SK-N-SH (cell line): ENCODE measurements at regions of chr3 and their contacts with region 1.

Region 1: GRCh38 chr3:170414202-170414663 is 4.4 kb upstream of the CLDN11 start:
- DNase-seq: peak; percentile 71
- H3K4me3 ChIP-seq: peak overlapping the region in 1 of 2 experiments; percentile 18; a peak in 1 of 4 replicates
- H3K27ac ChIP-seq: peak overlapping the region in 1 of 2 experiments; percentile 22; a peak in 2 of 4 replicates
- H3K4me1 ChIP-seq: peaks cover 0 to 6% of the 10 kb centered on the region in 2 experiments; a peak in 1 of 4 replicates
- H3K27me3 ChIP-seq: no peaks in the 10 kb centered on the region
- CTCF ChIP-seq: peak; percentile 99
- EP300 ChIP-seq: peak in 1 of 2 experiments; percentile 28; a peak in 1 of 4 replicates
- RAD21 ChIP-seq: peak; percentile 100

Region 2: DNA sequence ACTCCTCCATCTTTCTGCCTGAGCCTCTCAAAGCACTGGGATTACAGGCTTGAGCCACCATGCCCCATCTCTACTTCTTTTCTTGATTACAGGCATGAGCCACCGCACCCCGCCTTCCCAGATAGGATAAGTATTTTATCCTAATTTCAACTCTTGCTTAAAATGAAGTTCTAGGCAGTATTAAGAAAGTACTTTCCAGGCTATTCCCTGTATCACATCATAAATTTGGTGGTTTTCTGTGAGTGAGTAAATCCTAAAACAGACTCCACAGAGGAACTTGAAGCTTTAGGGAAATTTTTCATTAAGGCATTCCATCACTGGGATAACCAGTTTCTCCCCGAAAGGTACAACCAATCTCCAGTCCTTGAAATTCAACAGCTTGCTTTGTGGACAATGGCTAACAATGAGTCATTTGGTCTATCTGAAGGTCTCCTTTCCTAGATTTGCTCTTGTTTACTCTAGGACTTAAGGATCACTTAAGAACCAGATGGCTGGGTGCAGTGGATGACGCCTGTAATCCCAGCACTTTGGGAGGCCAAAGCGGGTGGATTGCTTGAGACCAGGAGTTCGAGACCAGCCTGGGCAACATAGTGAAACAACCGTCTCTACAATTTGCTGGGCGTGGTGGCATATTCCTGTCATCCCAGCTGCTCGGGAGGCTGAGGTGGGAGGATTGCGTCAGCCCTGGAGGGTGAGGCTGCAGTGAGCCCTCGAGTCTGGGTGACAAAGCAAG is 106.4 kb before region 1 on chr3:
- CTCF ChIA-PET with region 1: interaction called, 17 read pairs
- POLR2A ChIA-PET with region 1: no interaction called
- DNase-seq: no peak
- H3K4me3 ChIP-seq: no peak overlapping the region
- H3K27ac ChIP-seq: no peak overlapping the region
- H3K4me1 ChIP-seq: no peaks in the 10 kb centered on the region; a peak in 1 of 4 replicates
- H3K27me3 ChIP-seq: no peaks in the 10 kb centered on the region
- CTCF ChIP-seq: no peak
- EP300 ChIP-seq: no peak
- RAD21 ChIP-seq: no peak

Region 3: GRCh38 chr3:170397579-170398177 is 16.6 kb before region 1 on chr3:
- CTCF ChIA-PET with region 1: interaction called, 10 read pairs
- POLR2A ChIA-PET with region 1: no interaction called
- DNase-seq: no peak
- H3K4me3 ChIP-seq: no peak overlapping the region
- H3K27ac ChIP-seq: no peak overlapping the region
- H3K4me1 ChIP-seq: no peaks in the 10 kb centered on the region; a peak in 1 of 4 replicates
- H3K27me3 ChIP-seq: no peaks in the 10 kb centered on the region
- CTCF ChIP-seq: no peak
- EP300 ChIP-seq: no peak
- RAD21 ChIP-seq: no peak

Region 4: GRCh38 chr3:170454509-170454908 is 40.3 kb after region 1 on chr3:
- CTCF ChIA-PET with region 1: no interaction called
- POLR2A ChIA-PET with region 1: no interaction called
- DNase-seq: no peak
- H3K4me3 ChIP-seq: no peak overlapping the region
- H3K27ac ChIP-seq: no peak overlapping the region
- H3K4me1 ChIP-seq: no peaks in the 10 kb centered on the region
- H3K27me3 ChIP-seq: no peaks in the 10 kb centered on the region
- CTCF ChIP-seq: no peak
- EP300 ChIP-seq: no peak
- RAD21 ChIP-seq: no peak

Region 5: DNA sequence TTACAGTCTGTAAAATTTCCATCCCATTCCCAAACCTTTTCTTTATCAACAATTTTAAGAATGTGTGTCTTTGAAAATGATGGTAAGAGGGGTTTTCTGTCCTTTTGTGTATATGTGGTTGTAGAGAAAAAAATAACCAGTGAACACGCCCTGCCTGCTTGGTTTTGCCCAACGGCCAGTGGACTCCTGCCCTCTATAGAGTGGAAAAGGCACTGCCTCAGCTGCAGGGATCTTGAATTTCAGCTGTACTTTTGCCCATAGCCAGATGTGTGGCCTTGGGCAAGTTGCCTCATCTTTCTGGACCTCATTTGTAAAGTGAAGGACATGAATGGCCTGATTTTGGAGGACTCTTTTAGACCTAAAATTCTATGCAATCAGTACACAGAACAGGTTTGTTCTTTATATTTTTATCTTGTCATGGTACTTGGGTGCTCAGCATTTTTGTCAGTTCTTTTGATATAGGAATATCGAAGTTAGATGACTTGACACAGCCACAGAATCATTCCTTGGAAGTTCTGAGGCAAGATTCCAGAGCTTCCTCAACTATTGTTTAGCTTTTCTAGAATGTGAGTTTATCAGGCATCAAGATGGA is 85.4 kb after region 1 on chr3:
- CTCF ChIA-PET with region 1: interaction called, 15 read pairs
- POLR2A ChIA-PET with region 1: no interaction called
- DNase-seq: peak; percentile 62
- H3K4me3 ChIP-seq: no peak overlapping the region; a peak in 1 of 4 replicates
- H3K27ac ChIP-seq: no peak overlapping the region
- H3K4me1 ChIP-seq: no peaks in the 10 kb centered on the region
- H3K27me3 ChIP-seq: no peaks in the 10 kb centered on the region
- CTCF ChIP-seq: peak; percentile 57
- EP300 ChIP-seq: no peak
- RAD21 ChIP-seq: peak; percentile 70

Region 6: DNA sequence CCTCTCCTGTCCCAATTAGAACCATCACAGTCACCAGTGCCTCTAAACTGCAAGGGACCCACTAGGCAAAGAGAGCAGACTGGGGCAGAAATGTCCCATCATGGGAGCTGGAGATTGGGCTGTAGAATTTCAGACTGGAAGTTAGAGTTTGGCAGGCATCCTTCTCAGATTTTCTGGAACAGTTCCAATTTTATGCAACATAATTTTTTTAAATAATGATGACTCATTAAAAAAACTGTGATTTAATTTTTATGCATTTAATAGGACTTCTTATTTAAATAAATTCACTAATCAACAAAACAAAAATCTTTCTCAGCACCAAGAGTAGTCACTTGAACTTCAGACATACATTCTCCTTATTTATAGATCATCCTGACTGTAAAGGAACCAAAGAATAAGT is 256.3 kb after region 1 on chr3:
- CTCF ChIA-PET with region 1: no interaction called
- POLR2A ChIA-PET with region 1: no interaction called
- DNase-seq: no peak
- H3K4me3 ChIP-seq: no peak overlapping the region
- H3K27ac ChIP-seq: no peak overlapping the region
- H3K4me1 ChIP-seq: no peaks in the 10 kb centered on the region; a peak in 1 of 4 replicates
- H3K27me3 ChIP-seq: no peaks in the 10 kb centered on the region
- CTCF ChIP-seq: no peak
- EP300 ChIP-seq: no peak
- RAD21 ChIP-seq: no peak

Region 7: DNA sequence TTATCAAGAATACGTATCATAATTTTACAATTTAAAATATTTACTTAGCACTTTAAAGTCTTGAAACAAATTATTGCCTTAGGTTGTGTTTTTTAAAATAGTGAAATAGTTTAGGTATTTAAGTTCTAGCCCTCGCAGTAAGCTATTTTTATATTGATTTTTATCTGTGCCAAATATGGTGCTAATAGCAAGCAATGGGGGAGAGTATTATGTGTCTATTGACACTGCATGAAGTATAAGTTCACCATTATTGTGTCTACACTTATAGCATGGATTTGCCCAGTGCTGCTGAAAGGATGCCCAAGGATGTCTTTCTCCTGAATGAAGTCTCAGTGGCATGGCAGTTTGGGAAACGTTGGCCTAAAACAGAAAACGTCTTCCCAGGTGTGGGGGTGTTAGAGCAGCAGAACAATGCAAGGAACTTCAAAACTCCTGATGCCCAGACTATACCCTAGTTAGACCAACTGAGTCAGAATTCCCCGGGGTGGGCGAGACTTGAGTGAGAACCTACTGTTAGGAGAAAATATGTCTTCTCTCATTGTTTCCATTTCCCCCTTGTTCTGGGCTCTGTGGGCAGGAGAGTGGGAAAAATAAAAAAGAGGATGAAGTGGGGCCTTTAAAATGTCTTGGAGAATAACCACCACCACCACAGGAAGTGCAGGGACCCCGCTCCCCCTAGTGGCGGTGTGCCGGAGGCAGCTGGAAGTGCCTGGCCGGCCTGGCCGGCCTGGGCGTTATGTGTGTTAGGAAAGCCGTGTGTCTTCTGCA is 275.8 kb after region 1 on chr3:
- CTCF ChIA-PET with region 1: interaction called, 75 read pairs
- POLR2A ChIA-PET with region 1: no interaction called
- DNase-seq: peak; percentile 72
- H3K4me3 ChIP-seq: no peak overlapping the region; a peak in 1 of 4 replicates
- H3K27ac ChIP-seq: peak overlapping the region; percentile 48 to 78
- H3K4me1 ChIP-seq: peaks cover 3 to 19% of the 10 kb centered on the region in 2 experiments; a peak in 3 of 4 replicates
- H3K27me3 ChIP-seq: no peaks in the 10 kb centered on the region
- CTCF ChIP-seq: peak; percentile 64
- EP300 ChIP-seq: no peak
- RAD21 ChIP-seq: peak; percentile 90

Region 8: GRCh38 chr3:170848292-170848917 is 434.2 kb after region 1 on chr3:
- CTCF ChIA-PET with region 1: interaction called, 10 read pairs
- POLR2A ChIA-PET with region 1: no interaction called
- DNase-seq: peak; percentile 7
- H3K4me3 ChIP-seq: no peak overlapping the region
- H3K27ac ChIP-seq: no peak overlapping the region
- H3K4me1 ChIP-seq: no peaks in the 10 kb centered on the region
- H3K27me3 ChIP-seq: no peaks in the 10 kb centered on the region
- CTCF ChIP-seq: peak; percentile 73
- EP300 ChIP-seq: no peak
- RAD21 ChIP-seq: peak; percentile 62

Region 9: DNA sequence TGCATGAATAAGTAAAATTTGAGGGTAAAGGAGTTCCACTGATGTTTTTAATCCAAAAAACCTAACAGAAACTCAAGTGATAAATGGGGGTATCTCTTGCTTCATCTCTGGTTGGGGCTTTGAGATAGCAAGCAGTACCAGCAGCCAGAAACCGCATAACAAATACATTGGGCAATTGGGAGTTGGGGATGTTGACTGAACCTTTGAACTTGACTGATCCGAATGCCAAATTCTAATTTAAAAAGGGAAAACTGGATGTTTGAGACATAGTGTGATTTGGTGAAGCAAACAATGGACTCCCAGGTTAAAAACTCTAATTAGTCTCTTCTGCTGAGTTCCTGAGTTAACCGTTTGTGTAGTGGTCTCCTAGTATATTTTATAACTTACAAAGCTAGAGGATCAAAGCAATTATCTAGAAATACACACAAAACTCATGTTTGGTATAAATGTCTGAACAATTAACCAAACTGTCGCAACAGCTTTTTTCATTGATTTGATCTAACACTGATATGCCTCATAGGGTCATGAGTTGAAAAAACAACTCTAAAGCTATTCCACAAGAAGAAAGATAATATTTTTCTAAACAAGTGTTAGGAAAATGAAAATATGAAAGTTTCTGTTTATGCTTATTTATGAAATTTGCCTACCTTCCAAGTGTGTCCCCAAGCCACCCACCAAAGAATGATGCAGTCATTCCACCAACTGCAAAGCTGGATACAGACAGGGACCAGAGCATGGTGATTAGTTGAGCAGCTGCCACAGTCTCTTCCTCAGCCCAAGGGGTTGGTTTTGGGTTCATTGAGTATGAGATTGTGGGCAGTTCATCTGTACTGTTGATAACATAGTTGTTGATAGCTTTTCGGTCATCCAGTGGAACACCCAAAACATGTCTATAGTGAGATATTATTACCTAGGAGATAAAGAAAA is 599.9 kb after region 1 on chr3:
- CTCF ChIA-PET with region 1: no interaction called
- POLR2A ChIA-PET with region 1: no interaction called
- DNase-seq: no peak
- H3K4me3 ChIP-seq: no peak overlapping the region
- H3K27ac ChIP-seq: no peak overlapping the region
- H3K4me1 ChIP-seq: peaks cover 0 to 11% of the 10 kb centered on the region in 2 experiments; a peak in 2 of 4 replicates
- H3K27me3 ChIP-seq: no peaks in the 10 kb centered on the region
- CTCF ChIP-seq: no peak
- EP300 ChIP-seq: no peak
- RAD21 ChIP-seq: no peak